ENCODE measurements at regions of chr14 and their contacts with region 1.

Region 1: GRCh38 chr14:57317316-57317715 is 48.5 kb downstream of the AP5M1 start:
- DNase-seq: peak; percentile 79
- H3K4me3 ChIP-seq: no peak overlapping the region
- H3K27ac ChIP-seq: no peak overlapping the region
- H3K4me1 ChIP-seq: no peaks in the 10 kb centered on the region
- CTCF ChIP-seq: peak; percentile 96

Region 2: DNA sequence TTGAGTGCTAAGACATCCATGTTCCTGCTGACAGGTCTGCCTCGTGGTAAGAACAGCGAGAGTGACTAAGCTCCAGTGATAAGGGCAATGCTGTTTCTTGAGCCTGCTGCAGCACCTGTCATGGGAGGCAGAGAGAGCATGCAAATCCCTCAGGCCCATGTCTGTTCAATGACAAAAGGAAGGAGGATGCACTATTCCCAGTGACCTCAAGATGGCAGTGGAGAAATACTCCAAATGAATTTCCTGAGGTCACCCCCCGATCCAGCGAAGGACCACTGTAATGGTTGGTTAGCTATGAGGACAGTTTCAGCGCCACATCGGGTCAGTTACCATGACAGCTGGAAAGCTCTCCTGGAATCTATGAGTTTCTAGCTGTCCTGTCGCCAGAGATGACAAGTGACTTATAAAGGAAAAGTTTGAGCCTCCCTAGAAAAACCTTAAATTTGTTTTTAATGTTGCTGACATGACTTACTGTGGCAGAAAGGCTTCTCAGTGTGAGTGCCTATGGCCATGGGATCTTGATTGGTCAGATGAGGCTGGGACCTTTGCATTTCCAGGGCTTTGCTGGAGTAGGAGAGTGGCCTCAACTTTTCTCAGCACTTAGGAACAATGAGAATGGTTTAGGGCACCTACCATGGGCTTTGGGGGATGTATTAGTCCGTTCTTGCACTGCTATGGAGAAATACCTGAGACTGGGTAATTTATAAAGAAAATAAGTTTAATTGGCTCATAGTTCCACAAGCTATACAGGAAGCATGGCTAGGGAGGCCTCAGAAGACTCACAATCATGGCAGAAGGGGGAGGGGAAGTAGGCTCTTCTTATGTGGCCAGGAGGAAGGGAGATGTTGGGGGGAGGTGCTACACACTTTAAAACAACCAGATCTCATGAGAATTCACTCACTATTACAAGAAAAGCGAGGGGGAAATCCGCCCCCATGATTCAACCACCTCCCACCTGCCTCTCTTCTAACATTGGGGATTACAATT is 825.7 kb before region 1 on chr14:
- CTCF ChIA-PET with region 1: no interaction called
- POLR2A ChIA-PET with region 1: no interaction called
- intact Hi-C with region 1: loop called (anchors 1 kb)
- DNase-seq: peak; percentile 62
- H3K4me3 ChIP-seq: no peak overlapping the region
- H3K27ac ChIP-seq: no peak overlapping the region
- H3K4me1 ChIP-seq: no peaks in the 10 kb centered on the region
- CTCF ChIP-seq: peak; percentile 79

Region 3: DNA sequence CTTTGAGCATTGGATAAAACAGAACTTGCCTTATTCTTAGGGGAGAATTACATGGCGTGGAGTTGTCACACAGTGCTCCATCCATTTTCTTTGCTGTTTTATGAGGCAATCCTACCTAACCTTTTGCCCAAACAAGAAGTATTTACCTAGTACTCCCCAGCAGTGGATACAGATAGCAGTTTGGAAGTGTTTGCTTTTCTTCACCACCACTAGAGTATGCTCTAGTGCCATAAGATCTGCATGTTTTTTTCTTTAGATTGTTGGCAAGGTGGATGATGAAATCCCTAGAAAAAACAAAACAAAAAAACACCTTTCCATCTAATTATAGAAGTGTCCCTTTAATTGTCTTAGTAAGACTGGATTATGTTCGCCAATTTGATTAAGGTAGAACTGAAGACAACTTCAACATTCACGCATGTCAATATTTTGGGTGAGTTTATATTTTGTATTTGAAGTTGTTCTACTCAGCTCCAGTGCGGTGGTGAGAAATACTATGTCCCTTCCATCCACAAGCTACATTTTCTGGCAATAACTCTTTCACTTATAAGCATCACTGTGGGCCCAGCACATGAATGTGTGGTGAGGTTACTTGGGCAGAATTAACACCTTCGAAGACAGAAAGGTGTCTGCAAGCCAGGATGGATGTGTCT is 761.3 kb before region 1 on chr14:
- CTCF ChIA-PET with region 1: no interaction called
- POLR2A ChIA-PET with region 1: no interaction called
- intact Hi-C with region 1: loop called (anchors 10 kb)
- DNase-seq: peak; percentile 31
- H3K4me3 ChIP-seq: no peak overlapping the region
- H3K27ac ChIP-seq: no peak overlapping the region
- H3K4me1 ChIP-seq: no peaks in the 10 kb centered on the region
- CTCF ChIP-seq: peak; percentile 77

Region 4: GRCh38 chr14:56659964-56660551 is 657.3 kb before region 1 on chr14:
- CTCF ChIA-PET with region 1: no interaction called
- POLR2A ChIA-PET with region 1: no interaction called
- intact Hi-C with region 1: loop called (anchors 2 kb)
- DNase-seq: peak; percentile 40
- H3K4me3 ChIP-seq: no peak overlapping the region
- H3K27ac ChIP-seq: no peak overlapping the region
- H3K4me1 ChIP-seq: no peaks in the 10 kb centered on the region
- CTCF ChIP-seq: peak; percentile 84

Region 5: DNA sequence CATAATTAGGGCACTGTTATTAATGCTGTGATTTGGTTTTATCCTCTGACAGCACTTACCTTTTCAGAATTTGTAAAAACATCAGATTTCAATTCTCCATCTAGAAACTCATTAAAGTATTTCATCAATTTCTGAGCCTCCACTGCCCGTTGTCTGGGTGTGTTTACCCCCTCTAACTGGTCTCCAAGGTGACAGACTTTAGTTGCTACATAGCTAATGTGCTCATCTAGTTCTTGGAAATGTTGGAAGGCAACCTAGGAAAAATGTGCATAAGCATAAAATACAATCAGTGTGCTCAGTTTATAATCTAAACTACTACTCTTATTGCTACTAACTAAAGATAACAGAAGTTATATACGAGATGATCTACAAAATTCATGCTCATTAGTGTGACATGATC is 73.2 kb before region 1 on chr14:
- CTCF ChIA-PET with region 1: no interaction called
- POLR2A ChIA-PET with region 1: no interaction called
- intact Hi-C with region 1: no loop called
- DNase-seq: no peak
- H3K4me3 ChIP-seq: no peak overlapping the region
- H3K27ac ChIP-seq: no peak overlapping the region
- H3K4me1 ChIP-seq: no peaks in the 10 kb centered on the region
- CTCF ChIP-seq: no peak

Region 6: DNA sequence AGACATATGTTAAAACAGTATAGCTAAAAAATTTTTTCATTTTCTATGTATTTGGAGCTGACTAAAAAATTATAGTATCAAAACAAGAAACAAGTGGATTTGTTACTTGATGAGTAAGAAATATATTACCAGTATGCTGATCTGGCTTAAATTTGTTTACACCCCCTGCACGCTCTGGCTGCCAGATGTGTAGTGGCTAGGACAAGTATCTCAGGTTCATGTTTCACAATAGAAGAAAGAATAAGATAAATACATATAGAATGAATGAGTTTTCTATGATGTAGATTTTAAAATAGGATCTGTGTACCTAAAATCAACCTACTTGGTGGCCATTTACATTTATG is 86.2 kb after region 1 on chr14:
- CTCF ChIA-PET with region 1: no interaction called
- POLR2A ChIA-PET with region 1: no interaction called
- intact Hi-C with region 1: no loop called
- DNase-seq: no peak
- H3K4me3 ChIP-seq: no peak overlapping the region
- H3K27ac ChIP-seq: no peak overlapping the region
- H3K4me1 ChIP-seq: no peaks in the 10 kb centered on the region
- CTCF ChIP-seq: no peak